ENCODE measurements at regions of chr17 and their contacts with region 1.

Region 1: DNA sequence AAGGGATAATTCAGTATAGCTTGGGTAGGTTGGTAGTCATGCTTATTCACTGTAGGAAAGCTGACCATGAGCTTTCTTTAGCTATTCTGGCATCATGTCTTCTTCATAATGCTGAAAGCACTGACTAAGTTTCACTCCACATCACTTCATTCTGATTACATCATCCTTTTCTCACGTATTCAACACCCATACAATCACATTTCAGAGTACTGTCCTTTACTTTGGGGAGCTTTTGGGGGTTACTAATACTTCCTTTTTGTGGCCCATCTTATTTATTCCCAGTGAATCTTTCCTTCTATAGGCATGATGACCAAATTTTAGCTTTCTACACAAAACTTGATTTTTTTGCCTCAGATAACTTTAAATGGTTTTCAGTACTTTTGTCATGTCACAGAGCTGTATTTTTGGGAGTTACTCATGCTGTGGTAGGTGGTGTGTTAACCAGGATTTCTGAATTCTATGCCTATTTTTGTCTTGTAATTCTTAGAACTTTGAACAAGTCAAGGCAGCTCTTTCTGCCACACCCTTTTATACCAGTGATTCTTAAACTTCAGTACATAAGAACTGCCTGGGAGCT is 23.5 kb downstream of the TADA2A start:
- DNase-seq: no peak
- H3K4me3 ChIP-seq: no peak overlapping the region
- H3K27me3 ChIP-seq: no peaks in the 10 kb centered on the region
- CTCF ChIP-seq: no peak

Region 2: GRCh38 chr17:37342589-37342988 is 87.5 kb before region 1 on chr17:
- CTCF ChIA-PET with region 1: no interaction called
- POLR2A ChIA-PET with region 1: interaction called, 14 read pairs
- DNase-seq: no peak
- H3K4me3 ChIP-seq: no peak overlapping the region
- H3K27me3 ChIP-seq: no peaks in the 10 kb centered on the region
- CTCF ChIP-seq: no peak

Region 3: GRCh38 chr17:37506678-37507077 is 76.5 kb after region 1 on chr17:
- CTCF ChIA-PET with region 1: no interaction called
- POLR2A ChIA-PET with region 1: no interaction called
- DNase-seq: no peak
- H3K4me3 ChIP-seq: no peak overlapping the region
- H3K27me3 ChIP-seq: no peaks in the 10 kb centered on the region
- CTCF ChIP-seq: peak; percentile 56

Region 4: DNA sequence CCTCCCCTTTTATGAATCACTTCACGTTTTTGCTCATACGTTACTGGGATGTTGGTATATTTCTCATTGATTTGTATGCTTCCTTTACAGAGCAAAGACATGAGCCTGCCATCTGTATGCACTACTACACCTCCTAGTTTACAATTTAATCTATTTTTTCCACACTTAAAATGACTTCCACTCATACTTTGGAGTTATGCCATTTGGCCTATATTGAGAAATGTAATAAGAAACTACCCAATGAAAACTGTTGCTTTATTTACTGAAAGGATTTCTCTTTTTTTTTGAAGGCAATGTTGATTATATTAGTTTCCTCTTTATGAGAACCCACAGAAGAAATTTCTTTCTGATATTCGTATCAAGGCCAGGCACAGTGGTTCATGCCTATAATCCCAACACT is 102.6 kb after region 1 on chr17:
- CTCF ChIA-PET with region 1: no interaction called
- POLR2A ChIA-PET with region 1: no interaction called
- DNase-seq: no peak
- H3K4me3 ChIP-seq: no peak overlapping the region
- H3K27me3 ChIP-seq: no peaks in the 10 kb centered on the region
- CTCF ChIP-seq: no peak